ENCODE measurements at regions of chr2 and their contacts with region 1.

Region 1: DNA sequence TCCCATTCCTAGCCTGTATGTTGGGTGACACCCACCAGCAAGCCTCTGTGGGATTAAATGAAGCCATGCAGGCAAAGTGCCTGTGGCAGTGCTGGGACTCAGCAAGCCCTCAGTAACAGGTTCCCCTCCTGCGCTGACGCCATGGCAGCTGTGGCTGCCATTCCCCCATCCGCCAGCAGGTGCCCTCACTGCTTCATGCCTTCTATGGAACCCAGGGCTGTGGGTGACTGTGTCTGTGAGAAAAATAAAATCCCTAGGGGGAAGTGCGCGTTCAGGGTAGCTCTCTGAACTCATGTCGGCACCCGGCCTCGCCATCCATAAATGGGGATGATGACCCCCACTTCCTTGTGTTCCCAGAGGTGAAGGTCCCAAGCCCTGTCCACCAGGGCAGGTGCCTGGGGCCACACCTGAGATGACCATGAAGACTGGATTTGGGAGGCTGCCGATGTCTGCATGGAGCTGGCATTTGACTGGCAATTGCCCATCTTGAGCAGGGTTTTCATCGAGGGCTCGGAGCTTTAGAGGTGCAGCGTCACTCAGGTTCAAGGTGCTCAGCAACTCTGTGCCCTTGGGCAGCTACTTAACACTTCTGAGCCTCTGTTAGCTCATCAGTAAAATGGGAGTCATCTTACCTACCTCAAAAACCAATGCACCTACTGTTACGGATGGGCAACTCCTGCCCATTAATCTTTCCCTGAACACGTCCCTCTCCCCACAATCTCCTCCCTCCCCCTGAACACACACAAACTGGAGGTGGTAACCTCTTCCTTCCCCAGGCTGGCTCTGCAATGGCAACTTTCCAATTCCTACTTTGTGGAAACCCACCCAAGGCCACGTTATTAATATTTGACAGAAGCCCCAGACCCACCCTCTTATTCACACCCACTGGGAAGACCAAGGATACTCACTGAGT is 2.9 kb upstream of the MAL start:
- DNase-seq: peak; percentile 97
- H3K4me3 Mint-ChIP-seq: peak overlapping the region; percentile 69
- H3K27ac Mint-ChIP-seq: peak overlapping the region; percentile 81
- H3K4me1 Mint-ChIP-seq: peaks cover 42% of the 10 kb centered on the region
- H3K27me3 Mint-ChIP-seq: no peaks in the 10 kb centered on the region

Region 2: GRCh38 chr2:94880507-94880906 is 142.1 kb before region 1 on chr2:
- intact Hi-C with region 1: no loop called
- DNase-seq: no peak
- H3K4me3 Mint-ChIP-seq: no peak overlapping the region
- H3K27ac Mint-ChIP-seq: no peak overlapping the region
- H3K4me1 Mint-ChIP-seq: no peaks in the 10 kb centered on the region
- H3K27me3 Mint-ChIP-seq: peaks cover 4% of the 10 kb centered on the region

Region 3: DNA sequence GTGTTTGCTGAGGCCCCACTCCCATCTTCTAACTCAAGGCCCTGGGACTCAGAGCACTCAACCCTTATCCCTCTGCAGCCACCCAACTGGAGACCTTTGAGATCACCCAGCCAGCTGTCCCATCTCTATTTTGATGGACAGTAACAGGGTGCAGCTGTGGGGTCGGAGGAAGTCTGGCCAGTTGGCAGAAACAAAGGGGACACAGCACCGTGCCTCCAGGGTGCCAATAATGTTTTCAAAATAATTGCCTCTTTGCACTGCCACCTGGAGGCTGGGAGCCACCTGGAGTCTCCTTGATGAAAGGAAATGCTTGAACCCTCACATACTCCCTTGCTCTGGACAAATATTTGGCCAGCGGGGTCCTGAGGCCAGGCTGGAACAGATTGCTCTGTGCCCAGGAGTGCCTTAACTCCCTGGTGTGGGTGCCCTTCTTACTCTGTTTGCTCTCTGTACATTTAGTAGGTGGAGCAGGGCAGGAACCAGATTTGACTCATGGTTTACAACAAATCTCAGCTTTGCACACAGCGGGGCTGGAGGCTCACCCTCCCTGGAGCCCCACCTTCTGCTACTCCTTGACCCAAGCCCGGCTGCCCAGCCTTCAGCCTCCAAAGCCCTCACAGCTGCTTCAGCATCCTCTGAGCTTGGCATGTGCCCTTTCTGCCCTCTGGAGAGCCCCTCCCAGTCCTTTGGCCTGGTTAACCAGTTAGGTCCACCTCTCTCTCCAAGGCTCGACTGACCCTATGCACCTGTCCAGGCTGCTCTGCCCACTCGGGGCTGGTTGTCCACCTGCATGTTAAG is 20.1 kb after region 1 on chr2:
- intact Hi-C with region 1: loop called (anchors 1 kb)
- DNase-seq: no peak
- H3K4me3 Mint-ChIP-seq: peak overlapping the region; percentile 22
- H3K27ac Mint-ChIP-seq: peak overlapping the region; percentile 78
- H3K4me1 Mint-ChIP-seq: peaks cover 74% of the 10 kb centered on the region
- H3K27me3 Mint-ChIP-seq: no peaks in the 10 kb centered on the region

Region 4: DNA sequence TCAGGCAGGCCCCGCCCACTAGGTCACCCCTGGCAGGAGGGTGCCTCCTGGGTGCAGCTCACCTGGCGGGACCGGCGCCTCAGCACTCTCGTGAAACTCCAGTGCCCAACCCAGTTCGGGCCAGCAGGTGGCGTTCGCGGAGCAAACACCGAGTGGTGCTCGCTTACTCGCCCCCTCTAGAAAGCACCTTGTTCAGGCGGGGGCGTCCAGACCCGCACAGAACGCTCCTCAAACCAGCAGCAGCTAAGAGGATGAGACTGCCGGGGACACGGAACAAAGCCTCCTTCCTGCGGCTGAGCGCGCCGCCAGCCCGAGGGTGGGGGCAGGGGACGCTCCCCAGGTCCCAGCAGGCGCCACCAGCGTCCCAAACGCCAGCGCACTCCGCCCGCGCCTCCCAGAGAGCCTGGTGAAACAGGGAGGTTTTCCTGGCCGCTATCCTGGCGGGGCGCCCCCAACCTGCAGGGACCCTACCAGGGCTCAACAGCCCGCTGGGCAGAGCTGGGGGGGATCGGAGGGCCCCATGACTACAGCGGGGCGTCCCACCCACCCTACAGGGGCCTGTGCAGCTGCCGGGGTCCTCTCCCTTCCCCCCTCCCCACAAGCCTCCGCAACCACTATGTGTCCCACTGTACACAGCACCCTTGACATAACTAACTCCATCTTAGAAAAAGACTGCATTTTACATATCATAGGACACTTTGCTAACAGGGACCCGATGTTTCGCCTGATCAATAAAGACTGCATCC is 54.4 kb after region 1 on chr2:
- intact Hi-C with region 1: loop called (anchors 1 kb)
- DNase-seq: peak; percentile 98
- H3K4me3 Mint-ChIP-seq: peak overlapping the region; percentile 95
- H3K27ac Mint-ChIP-seq: peak overlapping the region; percentile 99
- H3K4me1 Mint-ChIP-seq: peaks cover 69% of the 10 kb centered on the region
- H3K27me3 Mint-ChIP-seq: no peaks in the 10 kb centered on the region

Region 5: DNA sequence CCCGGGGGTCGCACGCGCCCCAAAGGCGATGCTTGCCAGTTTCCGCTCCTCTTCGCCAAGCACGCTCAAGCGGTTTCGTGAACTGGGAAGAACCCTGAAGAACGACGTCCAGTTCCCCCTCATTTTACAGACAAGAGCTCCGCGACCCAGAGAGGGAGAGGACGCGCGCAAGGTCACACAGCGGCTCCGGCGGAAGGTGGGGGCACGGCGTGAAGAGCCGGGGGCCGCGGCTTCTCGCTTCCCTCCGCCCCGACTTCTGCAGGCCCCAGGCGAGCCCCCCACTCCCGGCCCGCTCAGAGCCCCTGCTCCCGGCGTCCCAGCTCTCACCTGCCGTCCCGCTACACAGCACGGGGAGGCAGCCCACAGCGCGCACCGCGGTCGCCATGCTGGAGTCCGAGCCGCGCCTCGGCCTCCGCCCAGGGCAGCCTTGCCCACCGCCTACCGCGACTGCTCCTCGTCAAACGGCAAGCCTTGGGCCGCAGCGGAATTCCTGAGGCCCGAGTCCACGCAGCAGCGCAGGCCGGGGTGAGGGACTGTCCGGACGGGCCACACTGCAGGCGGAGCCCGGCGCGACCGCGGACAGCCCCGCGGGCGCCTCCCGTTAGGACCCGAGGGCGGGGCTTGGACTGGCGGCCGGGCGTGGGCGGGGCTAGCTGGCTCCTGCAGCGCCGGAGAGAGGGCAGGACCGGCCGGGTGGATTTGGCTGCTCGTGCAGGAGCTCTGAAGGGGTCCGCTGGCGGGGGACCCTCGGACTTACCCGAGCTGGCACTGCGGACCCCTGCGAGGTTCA is 99.0 kb after region 1 on chr2 and contains the start of gene MRPS5:
- intact Hi-C with region 1: loop called (anchors 1 kb)
- DNase-seq: peak; percentile 97
- H3K4me3 Mint-ChIP-seq: peak within 1 kb of the TSS; percentile 98
- H3K27ac Mint-ChIP-seq: peak within 1 kb of the TSS; percentile 96
- H3K4me1 Mint-ChIP-seq: peaks cover 40% of the 10 kb centered on the region
- H3K27me3 Mint-ChIP-seq: no peaks in the 10 kb centered on the region
- total RNA-seq, gene MRPS5: 97.4 and 103 TPM in 2 replicates

Region 6: GRCh38 chr2:95207111-95207961 is 184.8 kb after region 1 on chr2 and contains the start of gene ZNF892:
- intact Hi-C with region 1: loop called (anchors 1 kb)
- DNase-seq: peak; percentile 94
- H3K4me3 Mint-ChIP-seq: peak within 1 kb of the TSS; percentile 92
- H3K27ac Mint-ChIP-seq: peak within 1 kb of the TSS; percentile 82
- H3K4me1 Mint-ChIP-seq: peaks cover 11% of the 10 kb centered on the region
- H3K27me3 Mint-ChIP-seq: no peaks in the 10 kb centered on the region
- total RNA-seq, gene ZNF892: 4.7 and 5.5 TPM in 2 replicates

Measured in activated CD4-positive, alpha-beta T cell treated with anti-CD3 and anti-CD28 coated beads, Interleukin-2, amount 10 ng/mL, durations not matched to agents 24 days and 14 days (primary cell).